ENCODE measurements at regions of chr1 and their contacts with region 1.

Region 1: GRCh38 chr1:156090822-156091188 is 8.5 kb upstream of the MEX3A start:
- DNase-seq: peak; percentile 58 to 90
- H3K4me3 ChIP-seq: no peak overlapping the region
- H3K4me1 ChIP-seq: peaks cover 18% of the 10 kb centered on the region
- H3K27me3 ChIP-seq: no peaks in the 10 kb centered on the region

Region 2: GRCh38 chr1:156054500-156055280 is 36.1 kb before region 1 on chr1 and contains the start of gene LAMTOR2:
- in situ Hi-C with region 1: no loop called
- DNase-seq: peak; percentile 98 to 99
- H3K4me3 ChIP-seq: peak within 1 kb of the TSS; percentile 98
- H3K4me1 ChIP-seq: no peaks in the 10 kb centered on the region
- H3K27me3 ChIP-seq: no peaks in the 10 kb centered on the region

Region 3: GRCh38 chr1:156129706-156130581 is 39.1 kb after region 1 on chr1:
- in situ Hi-C with region 1: loop called (anchors 5 kb)
- DNase-seq: peak; percentile 92 to 97
- H3K4me3 ChIP-seq: no peak overlapping the region
- H3K4me1 ChIP-seq: peaks cover 38% of the 10 kb centered on the region
- H3K27me3 ChIP-seq: no peaks in the 10 kb centered on the region

Region 4: GRCh38 chr1:156262461-156263287 is 171.9 kb after region 1 on chr1:
- in situ Hi-C with region 1: no loop called
- DNase-seq: no peak
- H3K4me3 ChIP-seq: no peak overlapping the region
- H3K4me1 ChIP-seq: no peaks in the 10 kb centered on the region
- H3K27me3 ChIP-seq: no peaks in the 10 kb centered on the region